Activated CD4-positive, alpha-beta T cell treated with anti-CD3 and anti-CD28 coated beads for 36 hours (primary cell): ENCODE measurements at regions of chr9 and their contacts with region 1.

Region 1: GRCh38 chr9:137240861-137241489 is at the start of gene TUBB4B:
- DNase-seq: peak; percentile 98
- ATAC-seq: peak; percentile 84
- H3K4me3 Mint-ChIP-seq: peak within 1 kb of the TSS; percentile 83
- H3K27ac Mint-ChIP-seq: peak within 1 kb of the TSS; percentile 87
- H3K4me1 Mint-ChIP-seq: peaks cover 27% of the 10 kb centered on the region
- H3K27me3 Mint-ChIP-seq: no peaks in the 10 kb centered on the region
- total RNA-seq, gene TUBB4B: 264 to 278 TPM

Region 2: GRCh38 chr9:136728080-136728547 is 512.9 kb before region 1 on chr9:
- CTCF ChIA-PET with region 1: no interaction called
- POLR2A ChIA-PET with region 1: no interaction called
- intact Hi-C with region 1: loop called in 1 of 2 experiments (anchors 1 kb)
- DNase-seq: peak; percentile 95
- ATAC-seq: peak; percentile 72
- H3K4me3 Mint-ChIP-seq: peak overlapping the region; percentile 100
- H3K27ac Mint-ChIP-seq: no peak overlapping the region
- H3K4me1 Mint-ChIP-seq: peaks cover 39% of the 10 kb centered on the region
- H3K27me3 Mint-ChIP-seq: no peaks in the 10 kb centered on the region

Region 3: DNA sequence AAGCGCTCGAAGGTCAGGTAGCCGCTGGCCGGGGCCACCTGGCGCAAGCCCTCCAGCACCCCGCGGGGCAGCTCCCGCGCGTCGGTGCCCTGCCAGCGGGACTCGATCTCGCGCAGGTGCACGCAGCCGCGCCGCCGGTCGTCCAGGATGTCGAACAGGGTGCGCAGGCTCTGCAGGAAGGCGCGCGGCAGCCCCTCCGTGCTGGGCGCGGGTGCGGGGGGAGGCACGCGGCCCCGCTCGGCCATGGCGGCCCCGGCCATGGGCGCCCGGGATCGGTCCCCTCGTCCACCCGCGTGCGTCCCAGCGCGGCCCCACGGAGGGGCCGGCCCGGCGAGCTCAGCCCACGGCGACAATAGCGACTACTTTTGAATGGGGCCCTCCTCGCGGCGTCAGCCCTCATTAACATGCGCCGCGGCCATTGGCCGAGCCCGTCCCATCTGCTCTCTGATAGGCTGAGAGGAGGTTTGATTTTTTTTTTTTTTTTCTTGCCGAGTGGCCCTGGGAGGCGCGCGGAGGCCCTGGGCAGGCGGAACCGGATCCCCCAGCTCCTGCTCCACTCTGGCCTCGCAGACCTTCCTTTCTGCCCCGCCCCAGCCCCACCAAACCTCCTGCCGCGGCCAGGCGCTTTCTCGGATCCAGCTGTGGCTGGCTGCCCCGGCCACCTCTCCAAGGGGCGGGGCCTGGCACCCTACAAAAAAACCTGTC is 170.6 kb before region 1 on chr9 and contains the start of gene SAPCD2:
- CTCF ChIA-PET with region 1: interaction called, 7 read pairs
- POLR2A ChIA-PET with region 1: no interaction called
- intact Hi-C with region 1: loop called in 1 of 2 experiments (anchors 1 kb)
- DNase-seq: peak; percentile 92
- ATAC-seq: peak; percentile 91
- H3K4me3 Mint-ChIP-seq: peak within 1 kb of the TSS; percentile 71
- H3K27ac Mint-ChIP-seq: peak within 1 kb of the TSS; percentile 71
- H3K4me1 Mint-ChIP-seq: peaks cover 9% of the 10 kb centered on the region
- H3K27me3 Mint-ChIP-seq: no peaks in the 10 kb centered on the region
- total RNA-seq, gene SAPCD2: 6.4 to 8.8 TPM

Region 4: DNA sequence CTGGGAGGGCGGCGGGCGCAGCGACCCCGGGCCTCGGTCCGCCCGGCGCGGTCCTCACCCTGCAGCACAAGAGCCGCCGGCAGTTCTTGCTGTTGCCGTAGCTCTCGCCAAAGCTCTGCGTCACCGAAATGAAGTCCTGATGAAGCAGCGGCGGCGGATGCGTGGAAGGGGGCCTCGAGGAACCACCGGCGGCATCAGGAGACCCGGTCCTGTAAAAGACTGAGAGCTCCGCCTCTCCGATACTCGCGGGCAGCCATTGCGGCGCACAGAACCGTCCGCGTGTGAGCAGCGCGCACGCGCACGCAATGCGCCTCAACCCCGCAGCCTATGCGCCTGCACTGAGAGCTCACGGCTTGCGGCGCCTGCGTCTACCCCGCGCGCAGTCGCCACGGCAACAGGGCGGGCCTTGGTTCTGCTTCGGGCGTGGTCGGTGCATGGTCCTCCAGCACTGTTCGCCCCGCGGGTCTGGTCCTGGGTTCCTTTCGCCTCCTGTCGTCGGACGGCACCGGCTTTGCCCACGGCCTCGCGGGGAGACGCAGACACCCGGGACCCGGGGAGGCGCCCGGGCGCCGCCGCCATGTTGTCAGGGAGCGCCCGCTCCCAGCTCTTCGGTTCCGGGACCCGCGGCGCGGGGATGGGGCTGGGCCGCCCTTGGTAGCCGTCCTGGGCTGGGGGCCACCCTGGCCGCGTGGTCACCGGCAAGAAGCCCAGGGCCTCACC is 111.4 kb before region 1 on chr9:
- CTCF ChIA-PET with region 1: interaction called, 10 read pairs
- POLR2A ChIA-PET with region 1: interaction called, 8 read pairs
- intact Hi-C with region 1: loop called in 1 of 2 experiments (anchors 1 kb)
- DNase-seq: peak; percentile 95
- ATAC-seq: peak; percentile 96
- H3K4me3 Mint-ChIP-seq: peak overlapping the region; percentile 89
- H3K27ac Mint-ChIP-seq: peak overlapping the region; percentile 70
- H3K4me1 Mint-ChIP-seq: peaks cover 21% of the 10 kb centered on the region
- H3K27me3 Mint-ChIP-seq: peaks cover 5% of the 10 kb centered on the region

Region 5: GRCh38 chr9:137200311-137201204 is 40.4 kb before region 1 on chr9 and contains the start of gene TPRN:
- CTCF ChIA-PET with region 1: interaction called, 5 read pairs
- POLR2A ChIA-PET with region 1: interaction called, 6 read pairs
- intact Hi-C with region 1: loop called (anchors 1 to 2 kb)
- DNase-seq: peak; percentile 99
- ATAC-seq: peak; percentile 99
- H3K4me3 Mint-ChIP-seq: peak within 1 kb of the TSS; percentile 79
- H3K27ac Mint-ChIP-seq: peak within 1 kb of the TSS; percentile 76
- H3K4me1 Mint-ChIP-seq: peaks cover 29% of the 10 kb centered on the region
- H3K27me3 Mint-ChIP-seq: no peaks in the 10 kb centered on the region
- total RNA-seq, gene TPRN: 5.6 to 5.8 TPM

Region 6: DNA sequence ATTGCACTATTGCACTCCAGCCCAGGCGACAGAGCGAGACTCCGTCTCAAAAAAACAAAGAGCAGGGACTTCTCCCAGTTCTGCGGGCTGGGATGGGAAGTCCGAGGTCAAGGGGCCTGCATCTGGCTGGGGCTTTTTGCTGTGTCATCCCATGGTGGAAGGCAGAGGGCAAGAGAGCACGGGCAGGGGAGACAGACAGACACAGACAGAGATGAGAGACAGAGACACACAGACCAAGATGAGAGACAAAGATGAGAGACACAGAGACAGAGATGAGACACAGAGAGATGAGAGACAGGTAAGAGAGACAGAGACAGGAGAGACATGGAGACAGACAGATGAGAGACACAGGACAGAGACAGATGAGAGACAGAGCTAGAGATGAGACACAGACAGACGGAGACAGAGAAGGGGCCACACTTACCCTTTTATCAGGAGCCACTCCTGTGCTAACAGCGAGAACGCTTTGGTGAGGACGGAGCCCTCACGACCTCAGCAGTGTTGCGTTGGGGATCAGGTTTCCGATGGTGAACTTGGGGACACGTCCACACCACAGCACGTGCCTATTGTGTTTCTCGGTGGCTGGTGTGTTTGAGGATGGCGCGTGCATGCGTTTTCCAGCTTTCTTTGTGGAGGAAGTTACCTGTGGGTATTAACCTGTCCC is 27.7 kb after region 1 on chr9:
- CTCF ChIA-PET with region 1: no interaction called
- POLR2A ChIA-PET with region 1: no interaction called
- intact Hi-C with region 1: no loop called
- DNase-seq: no peak
- ATAC-seq: no peak
- H3K4me3 Mint-ChIP-seq: no peak overlapping the region
- H3K27ac Mint-ChIP-seq: no peak overlapping the region
- H3K4me1 Mint-ChIP-seq: peaks cover 8% of the 10 kb centered on the region
- H3K27me3 Mint-ChIP-seq: no peaks in the 10 kb centered on the region